ENCODE measurements at regions of chr1 and their contacts with region 1.

Region 1: DNA sequence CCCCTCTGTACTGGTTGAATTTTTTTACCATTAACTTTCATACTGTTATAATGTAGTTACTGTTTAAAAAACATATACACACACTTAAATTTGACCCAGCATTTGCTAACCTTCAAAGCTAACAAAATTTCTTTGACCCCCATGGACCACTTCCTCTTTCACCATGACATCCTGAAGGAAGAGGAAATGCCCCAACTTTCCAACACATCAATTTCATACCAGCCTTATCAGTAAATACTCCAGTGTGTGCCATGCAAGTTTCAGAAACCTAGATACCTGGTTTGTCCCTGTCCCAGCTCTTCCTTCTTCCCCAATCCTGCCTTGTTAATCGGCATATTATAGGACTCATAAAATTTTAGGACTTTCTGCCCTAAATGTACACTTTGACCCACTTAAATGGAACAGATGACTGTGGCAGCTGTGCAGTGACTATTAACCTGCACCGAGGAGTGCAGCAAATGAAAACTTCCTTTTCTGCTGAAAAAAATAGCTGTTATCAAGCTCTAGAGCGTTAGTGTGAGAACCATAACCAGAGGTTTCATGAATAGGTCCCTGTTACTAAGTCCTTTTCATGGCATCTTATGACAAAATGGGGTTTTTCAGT is 54.1 kb downstream of the DTL start:
- DNase-seq: no peak
- ATAC-seq: no peak
- H3K4me3 ChIP-seq: no peak overlapping the region
- H3K27ac ChIP-seq: no peak overlapping the region
- H3K4me1 ChIP-seq: 0 out of 5 replicates have a peak, but pooled peaks cover 0 to 3% of the 10 kb centered on the region in 2 experiments
- H3K27me3 ChIP-seq: no peaks in the 10 kb centered on the region
- CTCF ChIP-seq: no peak
- EP300 ChIP-seq: no peak
- POLR2A ChIP-seq: no peak
- RAD21 ChIP-seq: no peak

Region 2: GRCh38 chr1:212774584-212774983 is 684.9 kb after region 1 on chr1:
- CTCF ChIA-PET with region 1: no interaction called
- POLR2A ChIA-PET with region 1: no interaction called
- in situ Hi-C with region 1: loop called (anchors 10 kb)
- intact Hi-C with region 1: no loop called
- DNase-seq: peak in 2 of 4 experiments; percentile 18 to 82
- ATAC-seq: peak; percentile 89
- H3K4me3 ChIP-seq: no peak overlapping the region
- H3K27ac ChIP-seq: peak overlapping the region; percentile 65
- H3K4me1 ChIP-seq: peaks cover 0 to 5% of the 10 kb centered on the region in 2 experiments; a peak in 3 of 5 replicates
- H3K27me3 ChIP-seq: no peaks in the 10 kb centered on the region
- CTCF ChIP-seq: no peak
- EP300 ChIP-seq: peak; percentile 6; the same call in 1 of the 2 replicates
- POLR2A ChIP-seq: no peak
- RAD21 ChIP-seq: no peak